Activated naive CD8-positive, alpha-beta T cell treated with anti-CD3 and anti-CD28 coated beads, Interleukin-2, amount 10 ng/mL, durations not matched to agents 7 days and 5 days (primary cell): ENCODE measurements at regions of chr22 and their contacts with region 1.

Region 1: DNA sequence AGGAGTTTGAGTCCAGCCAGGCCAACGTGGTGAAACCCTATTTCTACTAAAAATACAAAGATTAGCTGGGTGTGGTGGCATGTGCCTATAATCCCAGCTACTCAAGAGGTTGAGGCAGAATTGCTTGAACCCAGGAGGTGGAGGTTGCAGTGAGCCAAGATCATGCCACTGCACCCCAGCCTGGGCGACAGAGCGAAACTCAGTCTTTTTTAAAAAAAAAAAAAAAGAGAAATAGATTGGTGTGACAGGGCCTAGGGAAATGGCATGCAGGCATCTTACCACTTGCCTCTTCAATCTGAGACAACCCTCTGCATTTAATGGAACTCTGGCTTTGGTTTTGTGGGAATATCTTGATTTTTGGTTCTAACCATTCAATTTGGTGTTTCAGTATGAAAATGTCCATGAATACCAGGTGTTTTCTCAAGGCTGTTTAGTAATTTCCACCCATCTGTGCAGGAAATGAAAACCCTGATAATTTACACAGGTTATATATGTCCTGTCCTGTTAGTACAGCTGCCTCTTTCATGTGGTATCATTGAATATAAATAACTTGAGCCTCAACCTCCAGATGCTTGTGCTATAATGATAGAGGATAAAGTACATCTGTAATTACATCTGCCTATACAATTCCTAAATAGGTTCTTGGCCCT is 8.4 kb downstream of the XBP1 start:
- DNase-seq: no peak
- ATAC-seq: peak; percentile 57
- H3K4me3 Mint-ChIP-seq: peak overlapping the region; percentile 52
- H3K27ac Mint-ChIP-seq: peak overlapping the region; percentile 80
- H3K4me1 Mint-ChIP-seq: peaks cover 66% of the 10 kb centered on the region
- H3K27me3 Mint-ChIP-seq: no peaks in the 10 kb centered on the region

Region 2: DNA sequence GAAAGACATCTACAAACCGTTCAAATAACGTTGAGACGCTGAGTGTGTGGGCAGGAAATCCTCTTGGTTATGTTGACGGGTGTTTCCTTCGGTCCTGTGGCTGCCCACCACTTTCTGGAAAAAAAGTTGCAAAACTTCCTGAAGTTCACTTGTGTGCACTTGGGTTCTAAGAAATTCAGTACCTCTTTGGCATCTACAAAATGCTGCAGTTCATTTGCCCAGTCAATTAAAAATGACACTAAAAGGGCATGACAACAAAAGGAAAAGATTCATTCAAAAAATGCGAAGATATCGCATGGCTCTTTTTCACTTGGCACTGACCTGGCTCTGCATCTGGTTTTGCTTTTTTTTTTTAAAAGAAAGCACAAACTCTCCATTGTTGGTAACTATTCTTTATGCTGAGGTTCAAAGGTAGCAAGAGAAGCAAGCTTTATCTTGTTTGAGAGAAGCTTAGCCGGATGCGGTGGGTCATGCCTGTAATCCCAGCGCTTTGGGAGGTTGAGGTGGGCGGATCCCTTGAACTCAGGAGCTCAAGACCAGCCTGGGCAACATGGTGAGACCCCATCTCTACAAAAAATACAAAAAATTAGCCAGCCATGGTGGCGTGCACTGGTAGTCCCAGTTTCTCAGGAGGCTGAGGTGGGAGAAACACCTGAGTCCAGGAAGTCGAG is 19.0 kb after region 1 on chr22:
- POLR2A ChIA-PET with region 1: interaction called, 208 read pairs
- DNase-seq: peak; percentile 53
- ATAC-seq: peak; percentile 42
- H3K4me3 Mint-ChIP-seq: peak overlapping the region; percentile 75
- H3K27ac Mint-ChIP-seq: peak overlapping the region; percentile 95
- H3K4me1 Mint-ChIP-seq: peaks cover 67% of the 10 kb centered on the region
- H3K27me3 Mint-ChIP-seq: peaks cover 2% of the 10 kb centered on the region

Region 3: GRCh38 chr22:28829358-28830181 is 37.6 kb after region 1 on chr22:
- POLR2A ChIA-PET with region 1: interaction called, 130 read pairs
- DNase-seq: peak; percentile 79
- ATAC-seq: peak; percentile 63
- H3K4me3 Mint-ChIP-seq: peak overlapping the region; percentile 57
- H3K27ac Mint-ChIP-seq: peak overlapping the region; percentile 66
- H3K4me1 Mint-ChIP-seq: peaks cover 36% of the 10 kb centered on the region
- H3K27me3 Mint-ChIP-seq: peaks cover 2% of the 10 kb centered on the region

Region 4: GRCh38 chr22:28864878-28865596 is 73.1 kb after region 1 on chr22:
- POLR2A ChIA-PET with region 1: no interaction called
- DNase-seq: no peak
- ATAC-seq: no peak
- H3K4me3 Mint-ChIP-seq: no peak overlapping the region
- H3K27ac Mint-ChIP-seq: no peak overlapping the region
- H3K4me1 Mint-ChIP-seq: no peaks in the 10 kb centered on the region
- H3K27me3 Mint-ChIP-seq: peaks cover 11% of the 10 kb centered on the region